B cell (primary cell): ENCODE measurements at regions of chr9 and their contacts with region 1.

Region 1: GRCh38 chr9:114397848-114398605 is 10.2 kb upstream of the AKNA start:
- DNase-seq: peak; percentile 98
- ATAC-seq: peak; percentile 76
- H3K4me3 ChIP-seq: peak overlapping the region; percentile 55 to 99 (median 93)
- H3K4me3 Mint-ChIP-seq: peak overlapping the region; percentile 93
- H3K27ac ChIP-seq: peak overlapping the region; percentile 99
- H3K27ac Mint-ChIP-seq: peak overlapping the region; percentile 94
- H3K4me1 ChIP-seq: peaks cover 42 to 54% of the 10 kb centered on the region in 2 donors
- H3K4me1 Mint-ChIP-seq: peaks cover 42% of the 10 kb centered on the region
- H3K27me3 ChIP-seq: no peaks in the 10 kb centered on the region
- H3K27me3 Mint-ChIP-seq: no peaks in the 10 kb centered on the region
- CTCF ChIP-seq: peak; percentile 14

Region 2: GRCh38 chr9:114207034-114207810 is 190.8 kb before region 1 on chr9:
- CTCF ChIA-PET with region 1: no interaction called
- POLR2A ChIA-PET with region 1: no interaction called
- intact Hi-C with region 1: no loop called
- DNase-seq: no peak
- ATAC-seq: no peak
- H3K4me3 ChIP-seq: no peak overlapping the region
- H3K4me3 Mint-ChIP-seq: no peak overlapping the region
- H3K27ac ChIP-seq: no peak overlapping the region
- H3K27ac Mint-ChIP-seq: no peak overlapping the region
- H3K4me1 ChIP-seq: no peaks in the 10 kb centered on the region
- H3K4me1 Mint-ChIP-seq: no peaks in the 10 kb centered on the region
- H3K27me3 ChIP-seq: no peaks in the 10 kb centered on the region
- H3K27me3 Mint-ChIP-seq: no peaks in the 10 kb centered on the region
- CTCF ChIP-seq: no peak

Region 3: GRCh38 chr9:114339130-114339908 is 58.7 kb before region 1 on chr9:
- CTCF ChIA-PET with region 1: interaction called, 91 read pairs
- POLR2A ChIA-PET with region 1: interaction called, 4 read pairs
- intact Hi-C with region 1: loop called (anchors 2 kb)
- DNase-seq: peak; percentile 74
- ATAC-seq: peak; percentile 68
- H3K4me3 ChIP-seq: no peak overlapping the region
- H3K4me3 Mint-ChIP-seq: no peak overlapping the region
- H3K27ac ChIP-seq: peak overlapping the region in 1 of 2 donors; percentile 71
- H3K27ac Mint-ChIP-seq: peak overlapping the region; percentile 80
- H3K4me1 ChIP-seq: peaks cover 0 to 17% of the 10 kb centered on the region in 2 donors
- H3K4me1 Mint-ChIP-seq: peaks cover 37% of the 10 kb centered on the region
- H3K27me3 ChIP-seq: no peaks in the 10 kb centered on the region
- H3K27me3 Mint-ChIP-seq: no peaks in the 10 kb centered on the region
- CTCF ChIP-seq: peak; percentile 91

Region 4: GRCh38 chr9:114366334-114367128 is 31.5 kb before region 1 on chr9:
- CTCF ChIA-PET with region 1: interaction called, 6 read pairs
- POLR2A ChIA-PET with region 1: interaction called, 45 read pairs
- intact Hi-C with region 1: loop called (anchors 5 kb)
- DNase-seq: peak; percentile 74
- ATAC-seq: peak; percentile 50
- H3K4me3 ChIP-seq: peak overlapping the region in 3 of 5 experiments; percentile 9 to 45 (median 23)
- H3K4me3 Mint-ChIP-seq: peak overlapping the region; percentile 71
- H3K27ac ChIP-seq: peak overlapping the region; percentile 80
- H3K27ac Mint-ChIP-seq: peak overlapping the region; percentile 90
- H3K4me1 ChIP-seq: peaks cover 88 to 99% of the 10 kb centered on the region in 2 donors
- H3K4me1 Mint-ChIP-seq: peaks cover 84% of the 10 kb centered on the region
- H3K27me3 ChIP-seq: no peaks in the 10 kb centered on the region
- H3K27me3 Mint-ChIP-seq: no peaks in the 10 kb centered on the region
- CTCF ChIP-seq: no peak

Region 5: GRCh38 chr9:114385412-114386181 is 12.4 kb before region 1 on chr9:
- CTCF ChIA-PET with region 1: interaction called, 19 read pairs
- POLR2A ChIA-PET with region 1: interaction called, 25 read pairs
- intact Hi-C with region 1: loop called (anchors 1 kb)
- DNase-seq: peak; percentile 92
- ATAC-seq: peak; percentile 83
- H3K4me3 ChIP-seq: peak overlapping the region; percentile 75 to 96 (median 89)
- H3K4me3 Mint-ChIP-seq: peak overlapping the region; percentile 97
- H3K27ac ChIP-seq: peak overlapping the region; percentile 87 to 93
- H3K27ac Mint-ChIP-seq: peak overlapping the region; percentile 93
- H3K4me1 ChIP-seq: peaks cover 65 to 81% of the 10 kb centered on the region in 2 donors
- H3K4me1 Mint-ChIP-seq: peaks cover 81% of the 10 kb centered on the region
- H3K27me3 ChIP-seq: no peaks in the 10 kb centered on the region
- H3K27me3 Mint-ChIP-seq: no peaks in the 10 kb centered on the region
- CTCF ChIP-seq: peak; percentile 8

Region 6: DNA sequence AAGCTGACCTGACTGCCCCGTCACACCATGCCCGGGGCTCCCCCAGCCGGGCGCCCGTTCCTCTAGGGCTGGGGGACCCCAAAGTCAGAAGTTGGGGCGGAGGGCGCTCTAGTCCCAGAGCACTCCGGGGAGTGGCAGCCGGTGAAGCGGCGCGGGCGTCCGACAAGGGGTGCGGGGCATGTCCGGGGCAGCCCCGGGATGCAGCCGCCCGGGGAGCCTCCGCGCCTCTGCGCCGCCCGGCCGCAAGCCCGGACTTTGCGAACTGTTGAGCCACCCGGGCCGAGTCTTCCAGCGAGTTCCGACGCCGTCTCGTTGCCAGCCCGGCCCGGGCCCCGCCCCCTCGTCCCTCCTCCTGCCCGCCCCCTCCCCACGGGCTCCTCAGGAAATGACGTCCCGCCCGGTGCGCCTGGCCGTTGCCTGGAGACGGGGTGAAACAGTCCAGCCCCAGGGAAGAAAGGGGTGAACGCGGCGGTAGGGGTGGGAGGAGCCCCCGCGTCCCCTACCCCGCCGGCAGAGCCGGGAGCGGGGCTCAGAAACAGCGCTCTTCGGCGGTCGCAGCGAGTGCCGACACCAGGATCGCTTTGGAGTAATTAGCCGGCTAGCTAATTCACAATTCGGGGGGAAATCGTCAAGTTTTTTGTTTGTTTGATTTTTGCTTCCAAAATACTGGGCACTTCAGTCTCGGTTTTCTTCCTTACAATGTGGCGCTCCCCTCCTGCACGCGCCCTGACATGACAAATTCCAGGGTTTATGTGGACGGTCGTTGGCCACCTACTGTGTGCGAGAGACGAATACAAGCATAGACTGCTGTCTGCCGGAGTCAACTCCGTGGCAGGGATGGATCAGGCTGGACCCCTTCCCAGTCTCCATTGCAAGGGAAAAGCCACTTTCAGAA is 107.4 kb after region 1 on chr9 and contains the start of gene WHRN:
- CTCF ChIA-PET with region 1: interaction called, 89 read pairs
- POLR2A ChIA-PET with region 1: interaction called, 4 read pairs
- intact Hi-C with region 1: loop called (anchors 1 kb)
- DNase-seq: peak; percentile 95
- ATAC-seq: peak; percentile 85
- H3K4me3 ChIP-seq: peak within 1 kb of the TSS; percentile 53 to 77 (median 65)
- H3K4me3 Mint-ChIP-seq: peak within 1 kb of the TSS; percentile 90
- H3K27ac ChIP-seq: peak within 1 kb of the TSS in 1 of 2 donors; percentile 62
- H3K27ac Mint-ChIP-seq: peak within 1 kb of the TSS; percentile 90
- H3K4me1 ChIP-seq: peaks cover 29 to 41% of the 10 kb centered on the region in 2 donors
- H3K4me1 Mint-ChIP-seq: peaks cover 43% of the 10 kb centered on the region
- H3K27me3 ChIP-seq: peaks cover 0 to 17% (median 9%) of the 10 kb centered on the region in 4 experiments
- H3K27me3 Mint-ChIP-seq: peaks cover 29% of the 10 kb centered on the region
- CTCF ChIP-seq: no peak
- total RNA-seq, gene WHRN: 95.7 and 96.6 TPM in 2 replicates